ENCODE measurements at regions of chr21 and their contacts with region 1.

Region 1: GRCh38 chr21:15233611-15234010 is 168.8 kb upstream of the NRIP1 start:
- DNase-seq: no peak
- ATAC-seq: no peak
- H3K4me3 ChIP-seq: no peak overlapping the region
- H3K27ac ChIP-seq: no peak overlapping the region
- H3K4me1 ChIP-seq: no peaks in the 10 kb centered on the region
- H3K27me3 ChIP-seq: no peaks in the 10 kb centered on the region
- CTCF ChIP-seq: no peak
- POLR2A ChIP-seq: no peak

Region 2: GRCh38 chr21:15483138-15483780 is 249.6 kb after region 1 on chr21:
- intact Hi-C with region 1: loop called in 1 of 2 experiments (anchors 10 kb)
- DNase-seq: peak; percentile 86 to 88 (median 87)
- ATAC-seq: peak; percentile 100
- H3K4me3 ChIP-seq: no peak overlapping the region
- H3K27ac ChIP-seq: no peak overlapping the region
- H3K4me1 ChIP-seq: peaks cover 0 to 9% (median 3%) of the 10 kb centered on the region in 4 donors
- H3K27me3 ChIP-seq: no peaks in the 10 kb centered on the region
- CTCF ChIP-seq: peak; percentile 92 to 95 (median 94)
- POLR2A ChIP-seq: no peak

Region 3: GRCh38 chr21:16082038-16082816 is 848.6 kb after region 1 on chr21:
- intact Hi-C with region 1: no loop called
- DNase-seq: no peak
- ATAC-seq: peak; percentile 49 to 77 (median 62)
- H3K4me3 ChIP-seq: peak overlapping the region; percentile 15 to 40 (median 35)
- H3K27ac ChIP-seq: peak overlapping the region; percentile 7 to 43 (median 11)
- H3K4me1 ChIP-seq: no peaks in the 10 kb centered on the region
- H3K27me3 ChIP-seq: no peaks in the 10 kb centered on the region
- CTCF ChIP-seq: peak; percentile 45 to 59 (median 50)
- POLR2A ChIP-seq: no peak